Transverse colon (tissue), 4 donors: ENCODE measurements at regions of chr1 and their contacts with region 1.

Region 1: GRCh38 chr1:167864392-167865010 is 49.4 kb downstream of the ADCY10 start:
- DNase-seq: no peak
- H3K4me3 ChIP-seq: no peak overlapping the region
- H3K27ac ChIP-seq: no peak overlapping the region
- H3K4me1 ChIP-seq: no peaks in the 10 kb centered on the region
- H3K27me3 ChIP-seq: no peaks in the 10 kb centered on the region
- CTCF ChIP-seq: no peak
- EP300 ChIP-seq: no peak
- POLR2A ChIP-seq: no peak

Region 2: DNA sequence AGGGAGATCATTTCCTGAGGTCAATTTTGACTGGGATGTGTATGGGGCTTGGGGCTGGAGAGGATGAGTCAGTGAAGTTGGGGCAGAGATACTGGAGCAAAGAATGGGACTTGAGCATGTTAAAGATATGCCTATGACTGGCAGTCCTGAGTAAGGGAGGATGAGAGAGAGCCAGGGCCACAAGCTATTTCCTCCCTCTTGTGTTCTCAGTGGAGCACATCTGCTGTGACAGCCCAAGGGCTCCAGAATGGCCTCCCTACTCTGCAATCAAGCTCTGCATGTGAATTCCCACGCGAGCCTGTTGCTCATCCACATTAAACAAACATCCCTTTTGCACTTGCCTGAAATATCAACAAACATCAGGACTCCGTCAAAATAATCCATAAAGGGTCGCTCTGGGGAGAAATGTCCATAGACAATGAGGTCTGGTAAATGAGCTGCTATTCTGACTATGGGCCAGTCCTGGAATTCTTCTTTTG is 40.2 kb after region 1 on chr1:
- in situ Hi-C with region 1: no loop called
- intact Hi-C with region 1: loop called (anchors 2 kb)
- DNase-seq: no peak
- H3K4me3 ChIP-seq: no peak overlapping the region
- H3K27ac ChIP-seq: no peak overlapping the region
- H3K4me1 ChIP-seq: no peaks in the 10 kb centered on the region
- H3K27me3 ChIP-seq: no peaks in the 10 kb centered on the region
- CTCF ChIP-seq: no peak
- EP300 ChIP-seq: no peak
- POLR2A ChIP-seq: no peak